HEK293 (cell line): ENCODE measurements at regions of chr9 and their contacts with region 1.

Region 1: DNA sequence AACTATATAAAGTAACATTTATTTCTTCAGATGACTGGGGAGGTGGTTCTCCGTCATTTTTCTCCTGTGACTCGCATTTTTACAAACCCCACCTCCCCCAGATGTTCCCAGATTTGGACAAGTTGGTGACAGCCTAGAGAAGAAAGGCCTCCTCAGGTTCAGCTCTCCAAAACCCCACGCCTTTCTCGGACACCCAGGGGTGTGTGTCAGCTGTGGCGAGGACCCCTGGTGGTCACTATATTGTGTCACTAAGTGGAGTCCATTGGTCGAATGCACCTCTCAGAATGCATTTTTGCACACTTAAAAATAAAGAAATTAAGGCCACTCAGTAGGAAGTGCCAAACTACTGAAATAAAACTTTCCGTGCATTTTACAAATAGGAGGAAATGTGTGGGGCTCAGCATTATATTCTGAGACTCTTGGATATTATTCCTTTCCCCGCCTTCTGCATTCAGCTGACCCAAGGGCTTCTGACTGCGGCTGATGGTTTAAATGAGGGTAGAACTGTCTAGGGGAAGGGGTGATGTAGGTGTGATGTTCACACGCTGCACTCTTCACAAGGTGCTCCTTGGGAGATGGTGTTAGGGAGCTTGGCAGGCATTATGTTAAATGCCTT is 47.6 kb downstream of the ACO1 start:
- H3K4me3 ChIP-seq: no peak overlapping the region
- H3K27ac ChIP-seq: no peak overlapping the region
- H3K4me1 ChIP-seq: no peaks in the 10 kb centered on the region
- CTCF ChIP-seq: peak; percentile 20; the same call in 1 of the 2 replicates

Region 2: GRCh38 chr9:32413424-32413823 is 18.6 kb before region 1 on chr9:
- CTCF ChIA-PET with region 1: interaction called, 16 read pairs
- POLR2A ChIA-PET with region 1: no interaction called
- H3K4me3 ChIP-seq: no peak overlapping the region
- H3K27ac ChIP-seq: no peak overlapping the region
- H3K4me1 ChIP-seq: no peaks in the 10 kb centered on the region
- CTCF ChIP-seq: no peak

Region 3: GRCh38 chr9:32442433-32442832 is 10.4 kb after region 1 on chr9:
- CTCF ChIA-PET with region 1: interaction called, 13 read pairs
- POLR2A ChIA-PET with region 1: no interaction called
- H3K4me3 ChIP-seq: no peak overlapping the region
- H3K27ac ChIP-seq: no peak overlapping the region
- H3K4me1 ChIP-seq: no peaks in the 10 kb centered on the region
- CTCF ChIP-seq: no peak

Region 4: GRCh38 chr9:32463500-32464293 is 31.6 kb after region 1 on chr9:
- CTCF ChIA-PET with region 1: no interaction called
- POLR2A ChIA-PET with region 1: interaction called, 11 read pairs
- H3K4me3 ChIP-seq: no peak overlapping the region
- H3K27ac ChIP-seq: no peak overlapping the region
- H3K4me1 ChIP-seq: no peaks in the 10 kb centered on the region
- CTCF ChIP-seq: no peak